PC-3 (cell line): ENCODE measurements at regions of chr14 and their contacts with region 1.

Region 1: DNA sequence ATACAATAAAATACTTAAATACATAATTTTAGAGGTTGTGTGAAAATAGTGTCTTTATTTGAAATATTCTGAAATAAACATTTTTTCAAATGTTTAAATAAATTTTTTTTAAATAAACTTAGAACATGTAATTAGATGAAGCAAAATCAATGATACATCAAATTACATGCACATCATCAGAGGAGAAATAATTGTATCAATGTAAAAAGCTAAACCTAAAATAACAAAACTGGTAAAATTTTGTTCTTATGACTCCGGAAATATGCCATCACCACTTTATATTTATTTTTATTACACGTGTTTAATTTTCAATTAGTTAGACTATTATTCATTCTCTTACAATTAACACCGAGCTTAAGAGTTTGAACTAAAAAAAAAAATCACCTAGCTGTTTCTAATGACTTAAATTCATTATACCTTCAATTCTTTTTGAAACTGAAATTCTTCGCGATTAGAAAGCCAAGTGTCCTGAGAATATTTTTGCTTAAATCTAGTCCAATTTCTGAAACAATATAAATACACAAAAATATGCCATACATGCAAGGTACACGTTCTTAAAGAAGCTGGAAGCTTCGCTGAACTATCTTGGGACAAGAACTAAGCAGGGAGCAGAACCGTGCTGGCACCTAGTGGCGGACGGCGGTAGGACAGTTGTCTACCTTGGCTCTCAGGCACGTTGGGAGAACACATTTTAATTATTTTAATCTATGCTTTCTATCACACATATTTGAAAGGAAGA is 230.5 kb downstream of the SLC25A21 start:
- DNase-seq: peak; percentile 88
- ATAC-seq: peak; percentile 57
- H3K4me3 ChIP-seq: no peak overlapping the region
- H3K27ac ChIP-seq: peak overlapping the region; percentile 89
- H3K4me1 ChIP-seq: peaks cover 40% of the 10 kb centered on the region
- H3K27me3 ChIP-seq: no peaks in the 10 kb centered on the region
- CTCF ChIP-seq: peak; percentile 97

Region 2: DNA sequence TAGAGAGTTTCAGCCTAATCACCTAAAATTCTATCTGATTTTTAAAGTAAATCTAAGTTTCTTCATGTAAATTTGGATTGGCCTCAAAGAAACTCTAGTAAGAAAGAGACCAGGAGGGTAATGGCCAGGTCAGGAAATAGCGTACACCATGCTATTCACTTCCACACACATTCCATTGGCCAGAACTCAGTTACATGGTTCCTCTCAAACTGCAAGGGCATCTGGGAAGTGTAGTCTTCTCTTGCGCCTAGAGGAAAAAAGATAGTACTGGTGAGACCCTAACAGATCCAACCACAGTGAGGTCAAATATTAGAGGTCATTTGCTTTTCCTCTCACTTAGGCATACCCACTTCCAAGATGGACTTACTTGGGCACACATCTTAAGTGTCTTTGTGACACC is 660.6 kb before region 1 on chr14:
- CTCF ChIA-PET with region 1: interaction called, 11 read pairs
- POLR2A ChIA-PET with region 1: no interaction called
- intact Hi-C with region 1: no loop called
- DNase-seq: no peak
- ATAC-seq: no peak
- H3K4me3 ChIP-seq: no peak overlapping the region
- H3K27ac ChIP-seq: no peak overlapping the region
- H3K4me1 ChIP-seq: no peaks in the 10 kb centered on the region
- H3K27me3 ChIP-seq: peaks cover 74% of the 10 kb centered on the region
- CTCF ChIP-seq: no peak

Region 3: GRCh38 chr14:36626151-36626550 is 315.8 kb before region 1 on chr14:
- CTCF ChIA-PET with region 1: no interaction called
- POLR2A ChIA-PET with region 1: no interaction called
- intact Hi-C with region 1: no loop called
- DNase-seq: no peak
- ATAC-seq: no peak
- H3K4me3 ChIP-seq: no peak overlapping the region
- H3K27ac ChIP-seq: no peak overlapping the region
- H3K4me1 ChIP-seq: no peaks in the 10 kb centered on the region
- H3K27me3 ChIP-seq: no peaks in the 10 kb centered on the region
- CTCF ChIP-seq: no peak

Region 4: GRCh38 chr14:36661756-36662498 is 280.0 kb before region 1 on chr14 and contains the start of gene PAX9:
- CTCF ChIA-PET with region 1: interaction called, 4 read pairs
- POLR2A ChIA-PET with region 1: interaction called, 5 read pairs
- intact Hi-C with region 1: loop called (anchors 1 kb)
- DNase-seq: peak; percentile 99
- ATAC-seq: peak; percentile 78
- H3K4me3 ChIP-seq: peak within 1 kb of the TSS; percentile 89
- H3K27ac ChIP-seq: peak within 1 kb of the TSS; percentile 77
- H3K4me1 ChIP-seq: peaks cover 25% of the 10 kb centered on the region
- H3K27me3 ChIP-seq: no peaks in the 10 kb centered on the region
- CTCF ChIP-seq: no peak
- total RNA-seq, gene PAX9: 14.3 and 14.9 TPM in 2 replicates

Region 5: DNA sequence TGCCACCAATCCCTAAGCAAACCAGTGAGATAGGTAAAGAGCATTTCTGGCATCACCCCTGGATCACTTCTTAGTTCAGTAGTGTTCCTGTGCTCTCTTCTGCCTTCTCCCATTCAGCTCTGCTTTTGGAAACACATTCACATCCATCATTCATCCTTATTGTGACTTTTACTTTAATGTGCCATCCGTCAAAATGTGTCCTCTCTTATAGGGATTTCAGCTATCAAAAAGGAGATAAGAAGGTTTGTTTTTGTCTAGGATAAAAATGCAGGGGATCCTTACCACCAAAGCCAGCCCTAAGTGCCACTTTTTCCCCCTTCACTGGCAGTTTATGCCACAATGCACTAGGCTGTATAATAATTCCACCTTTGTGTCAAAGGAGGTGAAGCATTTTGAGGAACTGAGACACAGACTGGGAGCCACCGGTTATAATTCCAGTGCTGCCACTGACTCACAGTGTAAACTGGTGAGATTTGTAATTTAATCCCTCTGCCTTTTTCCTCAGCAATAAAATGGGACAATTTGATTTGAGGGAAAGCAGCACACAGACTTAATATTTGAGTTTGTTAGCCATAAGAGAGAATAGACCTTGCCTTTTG is 121.7 kb before region 1 on chr14:
- CTCF ChIA-PET with region 1: no interaction called
- POLR2A ChIA-PET with region 1: no interaction called
- intact Hi-C with region 1: loop called (anchors 2 kb)
- DNase-seq: peak; percentile 91
- ATAC-seq: peak; percentile 94
- H3K4me3 ChIP-seq: peak overlapping the region; percentile 29; the same call in 1 of the 2 replicates
- H3K27ac ChIP-seq: peak overlapping the region; percentile 63
- H3K4me1 ChIP-seq: peaks cover 49% of the 10 kb centered on the region
- H3K27me3 ChIP-seq: no peaks in the 10 kb centered on the region
- CTCF ChIP-seq: no peak

Region 6: GRCh38 chr14:36981832-36982528 is 40.0 kb after region 1 on chr14:
- CTCF ChIA-PET with region 1: no interaction called
- POLR2A ChIA-PET with region 1: no interaction called
- intact Hi-C with region 1: loop called (anchors 1 kb)
- DNase-seq: peak; percentile 93
- ATAC-seq: peak; percentile 92
- H3K4me3 ChIP-seq: no peak overlapping the region
- H3K27ac ChIP-seq: peak overlapping the region; percentile 91
- H3K4me1 ChIP-seq: peaks cover 27% of the 10 kb centered on the region
- H3K27me3 ChIP-seq: no peaks in the 10 kb centered on the region
- CTCF ChIP-seq: no peak

Region 7: GRCh38 chr14:37142835-37143401 is 201.0 kb after region 1 on chr14:
- CTCF ChIA-PET with region 1: interaction called, 4 read pairs
- POLR2A ChIA-PET with region 1: no interaction called
- intact Hi-C with region 1: loop called (anchors 1 kb)
- DNase-seq: peak; percentile 90
- ATAC-seq: peak; percentile 97
- H3K4me3 ChIP-seq: peak overlapping the region; percentile 22
- H3K27ac ChIP-seq: peak overlapping the region; percentile 71
- H3K4me1 ChIP-seq: peaks cover 37% of the 10 kb centered on the region
- H3K27me3 ChIP-seq: no peaks in the 10 kb centered on the region
- CTCF ChIP-seq: no peak